CD8-positive, alpha-beta T cell (primary cell): ENCODE measurements at regions of chr16 and their contacts with region 1.

Region 1: DNA sequence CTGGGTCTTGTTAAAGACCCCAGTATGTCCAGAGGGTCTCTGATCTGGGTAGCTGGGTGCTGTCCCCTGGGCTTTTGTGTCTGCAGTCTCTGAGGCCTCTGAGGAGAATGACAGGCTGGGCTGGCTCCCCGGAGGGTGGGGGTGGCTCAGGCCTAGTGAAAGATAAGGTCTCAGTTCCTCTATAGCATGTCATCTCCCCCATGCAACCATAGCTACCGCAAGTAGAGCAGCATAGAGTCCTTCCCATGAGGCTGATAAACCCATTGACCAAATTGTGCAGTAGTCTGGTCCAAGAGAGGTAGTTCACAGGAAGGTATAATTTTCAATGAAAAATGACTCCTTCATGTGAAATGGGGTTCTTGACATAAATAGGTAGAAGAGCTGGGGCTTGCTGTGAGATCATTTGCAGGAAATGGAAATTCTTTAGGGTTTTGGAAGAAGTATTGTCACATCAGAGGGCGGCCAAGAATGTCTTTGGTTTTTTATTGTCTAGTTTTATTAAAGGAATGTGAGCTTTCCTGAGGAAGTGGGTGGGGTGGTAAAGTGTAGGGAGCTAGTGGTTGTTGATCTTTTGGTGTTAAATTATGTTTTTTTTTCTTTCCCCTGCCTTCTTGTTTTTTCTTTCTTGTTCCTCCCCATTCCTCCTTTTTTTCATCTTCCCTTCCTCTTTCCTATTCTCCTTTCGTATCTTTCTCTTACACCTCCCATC is 21.0 kb downstream of the SLC7A6OS start:
- DNase-seq: peak in 7 of 9 experiments; percentile 32 to 64 (median 56)
- ATAC-seq: peak; percentile 44
- H3K4me3 ChIP-seq: no peak overlapping the region
- H3K4me3 Mint-ChIP-seq: peak overlapping the region; percentile 53
- H3K27ac ChIP-seq: peak overlapping the region; percentile 26 to 82
- H3K27ac Mint-ChIP-seq: peak overlapping the region; percentile 90
- H3K4me1 ChIP-seq: peaks cover 82% of the 10 kb centered on the region
- H3K4me1 Mint-ChIP-seq: peaks cover 84% of the 10 kb centered on the region
- H3K27me3 ChIP-seq: no peaks in the 10 kb centered on the region
- H3K27me3 Mint-ChIP-seq: no peaks in the 10 kb centered on the region
- CTCF ChIP-seq: no peak

Region 2: GRCh38 chr16:66740010-66740409 is 1549.8 kb before region 1 on chr16:
- CTCF ChIA-PET with region 1: no interaction called
- POLR2A ChIA-PET with region 1: no interaction called
- intact Hi-C with region 1: no loop called
- DNase-seq: peak in 4 of 9 experiments; percentile 27 to 63 (median 44)
- ATAC-seq: peak; percentile 79
- H3K4me3 ChIP-seq: no peak overlapping the region
- H3K4me3 Mint-ChIP-seq: no peak overlapping the region
- H3K27ac ChIP-seq: no peak overlapping the region
- H3K27ac Mint-ChIP-seq: no peak overlapping the region
- H3K4me1 ChIP-seq: no peaks in the 10 kb centered on the region
- H3K4me1 Mint-ChIP-seq: peaks cover 24% of the 10 kb centered on the region
- H3K27me3 ChIP-seq: no peaks in the 10 kb centered on the region
- H3K27me3 Mint-ChIP-seq: no peaks in the 10 kb centered on the region
- CTCF ChIP-seq: peak; percentile 65

Region 3: DNA sequence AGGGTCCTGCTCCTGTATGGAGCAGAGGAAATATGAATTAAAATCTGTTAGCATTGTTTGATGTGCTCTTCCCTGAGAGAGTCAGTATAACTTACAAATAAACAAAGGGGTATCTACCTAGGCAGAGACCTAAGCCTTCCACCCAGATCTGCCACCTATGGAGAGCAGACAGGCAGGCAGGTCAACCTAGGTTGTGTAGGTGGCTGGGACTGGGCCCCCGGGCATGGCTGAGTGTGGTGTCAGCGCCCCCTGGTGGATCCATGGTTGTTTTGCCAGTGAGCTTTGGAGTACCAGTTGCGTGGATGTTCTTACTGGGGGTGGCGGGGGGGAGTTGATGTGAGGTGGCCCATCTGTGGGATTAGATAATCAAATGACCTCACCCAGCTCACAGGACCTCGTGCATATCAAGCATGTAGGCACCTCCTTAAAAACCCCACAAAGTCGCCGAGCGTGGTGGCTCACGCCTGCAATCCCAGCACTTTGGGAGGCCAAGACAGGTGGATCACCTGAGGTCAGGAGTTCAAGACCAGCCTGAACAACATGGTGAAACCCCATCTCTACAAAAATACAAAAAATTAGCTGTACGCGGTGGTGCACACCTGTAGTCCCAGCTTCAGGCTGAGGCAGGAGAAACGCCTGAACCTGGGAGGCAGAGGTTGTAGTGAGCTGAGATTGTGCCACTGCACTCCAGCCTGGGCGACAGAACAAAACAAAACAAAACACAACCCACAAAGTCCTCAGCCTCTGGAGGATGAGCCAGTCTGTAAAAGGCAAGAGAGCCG is 249.1 kb before region 1 on chr16:
- CTCF ChIA-PET with region 1: no interaction called
- POLR2A ChIA-PET with region 1: no interaction called
- intact Hi-C with region 1: no loop called
- DNase-seq: peak; percentile 84 to 98 (median 90)
- ATAC-seq: peak; percentile 99
- H3K4me3 ChIP-seq: no peak overlapping the region
- H3K4me3 Mint-ChIP-seq: no peak overlapping the region
- H3K27ac ChIP-seq: peak overlapping the region in 1 of 2 experiments; percentile 7
- H3K27ac Mint-ChIP-seq: peak overlapping the region; percentile 45
- H3K4me1 ChIP-seq: peaks cover 6% of the 10 kb centered on the region
- H3K4me1 Mint-ChIP-seq: peaks cover 11% of the 10 kb centered on the region
- H3K27me3 ChIP-seq: no peaks in the 10 kb centered on the region
- H3K27me3 Mint-ChIP-seq: no peaks in the 10 kb centered on the region
- CTCF ChIP-seq: peak; percentile 88

Region 4: DNA sequence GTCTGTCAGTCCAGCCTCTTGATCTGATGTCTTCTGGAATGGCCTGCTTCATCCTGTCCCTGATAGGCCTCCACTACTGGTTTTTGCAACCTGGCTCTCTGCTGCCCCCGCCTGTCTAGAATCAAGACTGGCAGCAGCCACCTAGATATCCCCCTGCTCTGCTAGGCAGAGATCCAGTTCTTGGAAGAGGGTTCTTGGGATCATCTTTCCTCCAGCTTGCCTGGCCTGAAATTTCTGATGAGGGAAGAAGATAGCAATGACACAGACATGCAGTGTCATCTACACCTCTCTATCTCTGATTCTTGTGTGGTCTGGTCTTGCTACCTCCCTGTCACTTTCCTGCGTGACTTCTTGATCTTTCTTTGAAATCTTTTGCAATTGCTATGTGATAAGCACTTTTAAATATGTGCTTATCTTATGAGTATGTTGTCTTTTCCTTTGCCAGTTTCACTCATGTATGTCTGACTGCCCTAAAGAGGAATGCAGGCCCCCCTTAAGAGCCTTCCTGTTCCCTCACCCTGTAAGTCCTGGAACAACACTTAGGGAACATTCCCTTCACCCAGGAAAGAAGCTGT is 224.9 kb before region 1 on chr16:
- CTCF ChIA-PET with region 1: no interaction called
- POLR2A ChIA-PET with region 1: no interaction called
- intact Hi-C with region 1: no loop called
- DNase-seq: peak; percentile 39 to 86 (median 73)
- ATAC-seq: peak; percentile 82
- H3K4me3 ChIP-seq: no peak overlapping the region
- H3K4me3 Mint-ChIP-seq: no peak overlapping the region
- H3K27ac ChIP-seq: peak overlapping the region in 1 of 2 experiments; percentile 58
- H3K27ac Mint-ChIP-seq: peak overlapping the region; percentile 92
- H3K4me1 ChIP-seq: peaks cover 72% of the 10 kb centered on the region
- H3K4me1 Mint-ChIP-seq: peaks cover 76% of the 10 kb centered on the region
- H3K27me3 ChIP-seq: no peaks in the 10 kb centered on the region
- H3K27me3 Mint-ChIP-seq: no peaks in the 10 kb centered on the region
- CTCF ChIP-seq: peak; percentile 85

Region 5: DNA sequence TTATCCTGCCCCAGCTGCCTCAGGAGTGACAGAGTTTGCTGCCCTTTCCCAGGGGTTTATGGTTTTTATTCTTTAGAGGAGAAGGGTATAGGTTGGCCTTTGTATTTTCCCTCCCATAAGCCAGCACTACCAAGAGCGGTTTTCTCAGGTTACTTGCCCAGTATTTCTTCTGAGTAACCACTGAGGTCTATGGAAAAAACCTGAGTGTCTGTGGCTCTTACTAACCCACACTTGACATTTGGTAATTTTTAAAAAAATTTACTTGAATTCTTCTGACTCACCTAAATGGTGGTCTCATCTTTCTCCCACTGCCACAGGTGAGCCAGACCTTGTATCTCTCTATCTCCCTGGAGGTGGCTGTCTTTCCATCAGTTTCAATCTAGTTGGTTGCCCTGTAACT is 19.4 kb before region 1 on chr16:
- CTCF ChIA-PET with region 1: interaction called, 332 read pairs
- POLR2A ChIA-PET with region 1: interaction called, 88 read pairs
- intact Hi-C with region 1: loop called (anchors 2 kb)
- DNase-seq: peak in 2 of 9 experiments; percentile 41 to 56
- ATAC-seq: peak; percentile 7
- H3K4me3 ChIP-seq: no peak overlapping the region
- H3K4me3 Mint-ChIP-seq: no peak overlapping the region
- H3K27ac ChIP-seq: peak overlapping the region; percentile 57 to 64
- H3K27ac Mint-ChIP-seq: peak overlapping the region; percentile 96
- H3K4me1 ChIP-seq: peaks cover 91% of the 10 kb centered on the region
- H3K4me1 Mint-ChIP-seq: peaks cover 80% of the 10 kb centered on the region
- H3K27me3 ChIP-seq: no peaks in the 10 kb centered on the region
- H3K27me3 Mint-ChIP-seq: no peaks in the 10 kb centered on the region
- CTCF ChIP-seq: no peak

Region 6: GRCh38 chr16:68275611-68276191 is 14.1 kb before region 1 on chr16:
- CTCF ChIA-PET with region 1: interaction called, 21 read pairs
- POLR2A ChIA-PET with region 1: interaction called, 85 read pairs
- intact Hi-C with region 1: loop called (anchors 1 to 2 kb)
- DNase-seq: peak in 7 of 9 experiments; percentile 37 to 87 (median 70)
- ATAC-seq: peak; percentile 79
- H3K4me3 ChIP-seq: peak overlapping the region in 1 of 2 experiments; percentile 19
- H3K4me3 Mint-ChIP-seq: peak overlapping the region; percentile 70
- H3K27ac ChIP-seq: peak overlapping the region; percentile 31 to 77
- H3K27ac Mint-ChIP-seq: peak overlapping the region; percentile 96
- H3K4me1 ChIP-seq: peaks cover 77% of the 10 kb centered on the region
- H3K4me1 Mint-ChIP-seq: peaks cover 64% of the 10 kb centered on the region
- H3K27me3 ChIP-seq: no peaks in the 10 kb centered on the region
- H3K27me3 Mint-ChIP-seq: no peaks in the 10 kb centered on the region
- CTCF ChIP-seq: no peak

Region 7: DNA sequence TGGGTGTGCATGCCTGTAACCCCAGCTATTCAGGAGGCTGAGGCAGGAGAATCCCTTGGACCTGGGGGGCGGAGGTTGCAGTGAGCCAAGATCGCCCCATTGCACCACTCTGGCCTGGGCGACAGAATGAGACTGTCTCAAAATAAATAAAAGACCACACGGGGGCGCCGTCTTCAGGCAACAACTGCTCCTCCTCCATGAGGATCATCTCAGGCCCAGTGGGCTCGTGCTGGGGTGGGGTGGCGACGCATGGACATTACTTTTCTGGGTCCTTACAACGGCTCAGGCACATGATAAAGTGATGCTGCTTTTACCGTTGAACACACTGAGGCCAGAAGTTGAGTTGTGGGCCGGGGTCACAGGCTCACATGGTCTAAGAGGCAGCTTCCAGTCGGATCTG is 77.3 kb after region 1 on chr16:
- CTCF ChIA-PET with region 1: no interaction called
- POLR2A ChIA-PET with region 1: no interaction called
- intact Hi-C with region 1: no loop called
- DNase-seq: peak in 5 of 9 experiments; percentile 42 to 66 (median 55)
- ATAC-seq: peak; percentile 33
- H3K4me3 ChIP-seq: no peak overlapping the region
- H3K4me3 Mint-ChIP-seq: no peak overlapping the region
- H3K27ac ChIP-seq: no peak overlapping the region
- H3K27ac Mint-ChIP-seq: no peak overlapping the region
- H3K4me1 ChIP-seq: peaks cover 53% of the 10 kb centered on the region
- H3K4me1 Mint-ChIP-seq: peaks cover 44% of the 10 kb centered on the region
- H3K27me3 ChIP-seq: no peaks in the 10 kb centered on the region
- H3K27me3 Mint-ChIP-seq: peaks cover 2% of the 10 kb centered on the region
- CTCF ChIP-seq: peak; percentile 52